Activated CD4-positive, alpha-beta memory T cell treated with anti-CD3 and anti-CD28 coated beads for 36 hours (primary cell): ENCODE measurements at regions of chr11 and their contacts with region 1.

Region 1: GRCh38 chr11:6757373-6757967 is 14.3 kb downstream of the OR2AG2 start:
- DNase-seq: peak; percentile 74
- H3K4me3 Mint-ChIP-seq: no peak overlapping the region
- H3K27ac Mint-ChIP-seq: no peak overlapping the region
- H3K4me1 Mint-ChIP-seq: peaks cover 6% of the 10 kb centered on the region
- H3K27me3 Mint-ChIP-seq: peaks cover 1% of the 10 kb centered on the region

Region 2: DNA sequence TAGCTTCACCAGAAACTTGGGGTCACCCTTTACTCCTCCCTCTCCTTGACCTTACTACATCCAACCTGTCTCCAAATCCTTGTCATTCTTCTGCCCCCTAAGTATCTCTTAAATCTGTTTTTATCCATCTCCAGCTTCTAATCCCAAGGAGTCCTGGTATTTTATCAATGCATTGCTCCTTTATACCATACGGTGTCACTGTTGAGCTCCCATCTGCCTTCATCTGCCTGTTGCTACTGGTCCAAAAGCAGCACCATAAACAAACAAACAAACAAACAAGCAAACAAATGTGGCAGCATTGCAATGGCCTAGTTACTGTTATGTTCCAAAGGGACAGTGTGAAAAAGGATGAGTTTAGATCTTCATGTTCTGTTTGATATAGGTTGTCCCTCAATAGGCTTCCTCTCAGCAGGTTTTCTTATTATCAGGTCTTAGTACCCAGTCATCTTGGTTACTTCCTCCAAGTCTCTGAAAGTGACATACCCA is 226.2 kb before region 1 on chr11:
- CTCF ChIA-PET with region 1: interaction called, 6 read pairs
- POLR2A ChIA-PET with region 1: no interaction called
- intact Hi-C with region 1: loop called (anchors 1 kb)
- DNase-seq: no peak
- H3K4me3 Mint-ChIP-seq: no peak overlapping the region
- H3K27ac Mint-ChIP-seq: no peak overlapping the region
- H3K4me1 Mint-ChIP-seq: peaks cover 11% of the 10 kb centered on the region
- H3K27me3 Mint-ChIP-seq: no peaks in the 10 kb centered on the region

Region 3: DNA sequence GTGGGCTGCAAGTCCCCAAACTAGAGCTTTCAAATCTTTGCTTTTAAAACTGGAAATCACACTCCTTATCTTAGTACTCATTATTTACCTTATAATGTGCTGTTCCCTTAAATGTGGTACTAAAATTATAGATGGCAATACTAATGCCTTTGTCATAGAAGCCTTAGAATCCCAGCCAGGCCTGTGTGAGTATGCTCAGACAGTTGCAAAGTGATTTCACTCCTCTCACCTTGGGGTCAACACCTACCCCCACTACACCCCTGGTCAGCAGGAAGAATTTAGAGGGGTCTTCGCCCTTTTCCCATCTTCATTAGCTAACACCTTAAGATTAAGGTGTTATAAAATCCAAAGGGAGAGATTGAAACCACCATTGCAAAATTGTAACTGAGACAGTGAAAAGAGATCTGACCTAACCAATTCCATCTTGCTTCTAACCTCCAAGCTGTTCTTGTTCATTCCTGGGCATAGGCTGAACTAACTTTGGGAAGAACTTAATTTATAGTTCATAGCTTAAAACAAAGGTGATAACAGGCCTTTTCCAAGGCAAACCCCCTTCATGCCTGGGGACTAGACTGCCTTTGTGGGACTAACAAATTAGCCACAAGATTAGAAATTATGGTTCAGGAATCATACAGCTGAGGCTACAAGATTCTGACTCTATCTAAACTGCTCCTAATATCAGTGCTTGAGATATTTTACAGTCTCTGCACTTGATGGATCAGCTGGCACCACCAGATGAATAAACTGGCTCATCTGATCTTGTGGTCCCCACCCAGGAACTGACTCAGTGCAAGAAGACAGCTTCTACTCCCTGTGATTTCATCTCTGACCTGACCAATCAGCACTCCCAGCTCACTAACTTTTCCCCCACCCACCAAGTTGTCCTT is 63.9 kb before region 1 on chr11:
- CTCF ChIA-PET with region 1: interaction called, 18 read pairs
- POLR2A ChIA-PET with region 1: no interaction called
- intact Hi-C with region 1: no loop called
- DNase-seq: peak; percentile 83
- H3K4me3 Mint-ChIP-seq: peak overlapping the region; percentile 4
- H3K27ac Mint-ChIP-seq: peak overlapping the region; percentile 72
- H3K4me1 Mint-ChIP-seq: peaks cover 42% of the 10 kb centered on the region
- H3K27me3 Mint-ChIP-seq: no peaks in the 10 kb centered on the region

Region 4: DNA sequence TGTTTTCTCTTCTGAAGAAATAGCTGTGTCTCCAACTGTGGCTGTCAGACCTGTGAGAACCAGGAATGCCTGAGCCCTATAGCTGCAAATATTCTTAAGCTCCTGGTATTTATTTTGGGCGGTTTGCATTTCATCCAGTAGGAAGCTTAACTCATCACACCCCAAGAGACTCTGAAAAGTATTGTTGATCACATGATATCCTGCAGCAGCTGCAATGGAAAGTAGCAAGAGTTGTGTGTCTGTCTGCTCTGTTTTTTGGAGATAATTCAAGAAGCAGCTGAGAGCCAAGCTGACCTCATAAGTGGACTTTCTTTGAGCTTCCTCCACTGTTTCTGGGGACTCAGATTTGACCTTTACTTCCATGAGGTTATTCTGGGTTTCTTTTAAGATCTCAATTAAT is 37.9 kb before region 1 on chr11:
- CTCF ChIA-PET with region 1: interaction called, 39 read pairs
- POLR2A ChIA-PET with region 1: no interaction called
- intact Hi-C with region 1: no loop called
- DNase-seq: no peak
- H3K4me3 Mint-ChIP-seq: no peak overlapping the region
- H3K27ac Mint-ChIP-seq: no peak overlapping the region
- H3K4me1 Mint-ChIP-seq: peaks cover 71% of the 10 kb centered on the region
- H3K27me3 Mint-ChIP-seq: no peaks in the 10 kb centered on the region

Region 5: GRCh38 chr11:6727971-6728760 is 29.3 kb before region 1 on chr11:
- CTCF ChIA-PET with region 1: interaction called, 527 read pairs
- POLR2A ChIA-PET with region 1: no interaction called
- intact Hi-C with region 1: no loop called
- DNase-seq: no peak
- H3K4me3 Mint-ChIP-seq: no peak overlapping the region
- H3K27ac Mint-ChIP-seq: peak overlapping the region; percentile 52
- H3K4me1 Mint-ChIP-seq: peaks cover 77% of the 10 kb centered on the region
- H3K27me3 Mint-ChIP-seq: no peaks in the 10 kb centered on the region

Region 6: DNA sequence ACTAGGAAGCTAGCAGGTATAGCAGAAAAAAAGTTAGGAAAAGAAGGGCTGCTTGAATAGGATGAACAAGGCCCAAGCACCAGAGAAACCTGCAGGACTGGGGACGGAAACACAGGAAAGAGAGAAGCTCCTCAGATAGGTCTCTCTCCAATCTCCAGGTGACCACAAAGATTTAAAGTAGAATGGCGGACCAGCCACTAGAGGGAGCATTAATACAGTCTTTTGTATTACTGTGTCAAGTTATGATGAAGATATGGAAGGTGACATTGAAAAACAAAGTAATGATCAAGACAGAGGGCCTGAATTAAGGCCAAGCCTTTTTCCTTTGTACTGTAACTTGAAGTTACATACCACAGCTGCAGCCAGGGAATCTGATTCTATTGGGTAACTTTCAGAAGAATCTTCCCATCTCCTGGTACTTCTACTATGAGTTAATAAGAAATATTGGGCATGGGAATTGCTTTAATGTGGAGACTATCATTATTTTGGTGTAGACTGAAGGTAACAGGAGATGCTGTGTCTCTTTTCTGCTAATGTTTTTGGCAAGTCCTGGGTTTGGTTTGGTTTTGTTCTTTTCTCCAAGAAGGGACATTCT is 19.5 kb before region 1 on chr11:
- CTCF ChIA-PET with region 1: interaction called, 527 read pairs
- POLR2A ChIA-PET with region 1: no interaction called
- intact Hi-C with region 1: loop called (anchors 1 kb)
- DNase-seq: peak; percentile 67
- H3K4me3 Mint-ChIP-seq: no peak overlapping the region
- H3K27ac Mint-ChIP-seq: peak overlapping the region; percentile 53
- H3K4me1 Mint-ChIP-seq: peaks cover 89% of the 10 kb centered on the region
- H3K27me3 Mint-ChIP-seq: no peaks in the 10 kb centered on the region

Region 7: GRCh38 chr11:6746086-6746618 is 11.3 kb before region 1 on chr11:
- CTCF ChIA-PET with region 1: interaction called, 527 read pairs
- POLR2A ChIA-PET with region 1: interaction called, 10 read pairs
- intact Hi-C with region 1: no loop called
- DNase-seq: peak; percentile 52
- H3K4me3 Mint-ChIP-seq: no peak overlapping the region
- H3K27ac Mint-ChIP-seq: no peak overlapping the region
- H3K4me1 Mint-ChIP-seq: peaks cover 32% of the 10 kb centered on the region
- H3K27me3 Mint-ChIP-seq: no peaks in the 10 kb centered on the region